ENCODE measurements at regions of chr16 and their contacts with region 1.

Region 1: DNA sequence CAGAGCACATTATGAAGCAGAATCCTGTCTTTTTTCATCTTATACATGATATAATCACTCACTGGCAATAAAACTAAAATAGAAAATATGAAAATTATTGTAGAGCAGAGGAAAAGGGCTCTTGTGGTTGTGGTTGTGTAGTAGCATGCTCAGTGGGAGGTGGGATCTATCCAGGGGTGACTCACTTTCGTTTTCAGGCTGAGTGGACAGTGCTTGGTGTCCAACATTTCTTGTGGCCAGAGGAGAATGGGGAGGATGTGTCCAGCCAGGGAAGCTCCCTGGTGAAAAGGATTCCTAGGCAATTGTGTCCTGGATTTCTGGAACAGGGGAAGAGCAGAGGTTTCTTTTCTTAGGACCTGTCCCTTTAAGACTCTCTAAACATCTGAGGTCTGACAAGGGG is 31.9 kb upstream of the CPHXL start:
- DNase-seq: no peak

Region 2: GRCh38 chr16:75653922-75654321 is 104.3 kb before region 1 on chr16:
- intact Hi-C with region 1: loop called in 1 of 2 experiments (anchors 10 kb)
- DNase-seq: no peak